Body of pancreas (tissue), 4 donors: ENCODE measurements at regions of chr5 and their contacts with region 1.

Region 1: DNA sequence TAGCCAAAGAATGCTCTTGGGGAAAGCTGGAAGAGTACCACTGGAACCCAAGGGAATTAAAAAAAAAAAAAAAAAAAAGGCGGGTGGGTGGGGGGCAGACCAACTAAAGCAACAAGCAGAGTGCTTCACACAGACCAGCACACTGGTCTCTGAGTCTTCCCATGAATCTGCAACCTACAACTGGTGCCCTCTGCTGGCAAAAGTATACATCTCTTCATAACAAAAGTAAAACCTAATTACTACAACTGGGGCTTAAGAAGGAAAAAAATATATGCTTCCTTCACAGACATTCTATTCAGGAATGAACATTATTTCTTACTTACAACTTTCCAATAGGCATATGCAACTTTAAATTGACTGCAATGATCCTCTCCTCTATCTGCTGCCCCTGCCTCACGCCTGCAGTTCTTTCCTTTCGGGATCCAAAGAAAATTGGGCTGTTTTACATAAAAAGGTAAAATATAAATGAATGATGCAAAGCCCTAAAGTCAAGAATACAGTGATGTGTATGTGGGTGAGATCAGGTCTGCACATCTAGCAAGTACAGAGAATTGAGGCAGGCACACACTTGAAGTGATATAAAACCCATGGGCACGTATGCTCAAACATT is 7.2 kb upstream of the KLHL3 start:
- DNase-seq: peak; percentile 60 to 72 (median 66)
- ATAC-seq: peak; percentile 82
- H3K4me3 ChIP-seq: no peak overlapping the region
- H3K27ac ChIP-seq: no peak overlapping the region
- H3K4me1 ChIP-seq: peaks cover 8% of the 10 kb centered on the region
- H3K27me3 ChIP-seq: no peaks in the 10 kb centered on the region
- CTCF ChIP-seq: peak; percentile 28 to 78 (median 70)
- POLR2A ChIP-seq: no peak

Region 2: DNA sequence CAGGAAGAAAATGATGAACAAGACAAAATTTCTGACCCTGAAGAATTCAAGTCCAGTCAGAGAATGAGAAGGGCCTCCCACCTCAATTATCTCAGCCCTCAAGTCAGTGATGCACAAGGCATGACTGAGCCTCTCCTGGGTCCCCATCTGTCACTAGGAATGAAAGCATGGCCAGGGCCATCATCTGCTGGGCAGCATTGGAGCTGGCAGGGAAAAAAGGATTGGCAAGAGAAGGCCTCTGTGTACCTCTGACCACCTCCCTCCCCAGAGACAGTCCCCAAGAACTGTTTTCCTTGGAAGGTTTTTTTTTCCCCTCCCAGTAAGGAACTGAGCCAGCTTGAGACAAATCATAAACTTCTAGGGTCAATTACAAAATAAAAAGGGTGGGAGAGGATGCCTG is 83.9 kb before region 1 on chr5:
- intact Hi-C with region 1: loop called (anchors 5 kb)
- DNase-seq: no peak
- ATAC-seq: no peak
- H3K4me3 ChIP-seq: no peak overlapping the region
- H3K27ac ChIP-seq: no peak overlapping the region
- H3K4me1 ChIP-seq: peaks cover 18% of the 10 kb centered on the region
- H3K27me3 ChIP-seq: no peaks in the 10 kb centered on the region
- CTCF ChIP-seq: no peak
- POLR2A ChIP-seq: no peak

Region 3: DNA sequence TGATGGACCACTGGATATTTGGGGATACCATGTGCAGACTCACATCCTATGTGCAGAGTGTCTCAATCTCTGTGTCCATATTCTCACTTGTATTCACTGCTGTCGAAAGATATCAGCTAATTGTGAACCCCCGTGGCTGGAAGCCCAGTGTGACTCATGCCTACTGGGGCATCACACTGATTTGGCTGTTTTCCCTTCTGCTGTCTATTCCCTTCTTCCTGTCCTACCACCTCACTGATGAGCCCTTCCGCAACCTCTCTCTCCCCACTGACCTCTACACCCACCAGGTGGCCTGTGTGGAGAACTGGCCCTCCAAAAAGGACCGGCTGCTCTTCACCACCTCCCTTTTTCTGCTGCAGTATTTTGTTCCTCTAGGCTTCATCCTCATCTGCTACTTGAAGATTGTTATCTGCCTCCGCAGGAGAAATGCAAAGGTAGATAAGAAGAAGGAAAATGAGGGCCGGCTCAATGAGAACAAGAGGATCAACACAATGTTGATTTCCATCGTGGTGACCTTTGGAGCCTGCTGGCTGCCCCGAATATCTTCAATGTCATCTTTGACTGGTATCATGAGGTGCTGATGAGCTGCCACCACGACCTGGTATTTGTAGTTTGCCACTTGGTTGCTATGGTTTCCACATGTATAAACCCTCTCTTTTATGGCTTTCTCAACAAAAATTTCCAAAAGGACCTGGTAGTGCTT is 65.5 kb after region 1 on chr5:
- intact Hi-C with region 1: no loop called
- DNase-seq: no peak
- ATAC-seq: no peak
- H3K4me3 ChIP-seq: no peak overlapping the region
- H3K27ac ChIP-seq: no peak overlapping the region
- H3K4me1 ChIP-seq: peaks cover under 1% of the 10 kb centered on the region
- H3K27me3 ChIP-seq: no peaks in the 10 kb centered on the region
- CTCF ChIP-seq: no peak
- POLR2A ChIP-seq: no peak